ENCODE measurements at regions of chr2 and their contacts with region 1.

Region 1: DNA sequence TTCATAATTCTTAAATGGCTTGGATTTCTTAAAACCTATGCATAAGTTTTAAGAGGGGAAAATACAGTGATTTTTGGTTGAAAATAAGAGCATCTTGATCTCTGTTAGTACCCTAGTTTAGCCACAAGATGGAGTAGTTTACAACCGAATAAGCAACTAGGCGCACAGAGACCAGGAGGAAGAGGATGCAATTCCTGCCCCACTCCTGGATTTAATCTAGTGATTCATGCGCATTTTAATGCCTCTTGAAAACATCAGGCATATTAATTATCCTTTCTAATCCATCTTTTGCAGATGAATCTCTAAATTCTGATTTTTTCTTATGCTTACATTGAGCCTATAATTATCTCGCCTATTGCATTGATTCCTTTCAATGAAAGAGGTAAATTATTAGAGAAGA is 76.7 kb downstream of the MRPS9 start:
- DNase-seq: no peak
- ATAC-seq: no peak
- H3K4me3 Mint-ChIP-seq: no peak overlapping the region
- H3K27ac Mint-ChIP-seq: no peak overlapping the region
- H3K4me1 Mint-ChIP-seq: no peaks in the 10 kb centered on the region
- H3K27me3 Mint-ChIP-seq: no peaks in the 10 kb centered on the region

Region 2: DNA sequence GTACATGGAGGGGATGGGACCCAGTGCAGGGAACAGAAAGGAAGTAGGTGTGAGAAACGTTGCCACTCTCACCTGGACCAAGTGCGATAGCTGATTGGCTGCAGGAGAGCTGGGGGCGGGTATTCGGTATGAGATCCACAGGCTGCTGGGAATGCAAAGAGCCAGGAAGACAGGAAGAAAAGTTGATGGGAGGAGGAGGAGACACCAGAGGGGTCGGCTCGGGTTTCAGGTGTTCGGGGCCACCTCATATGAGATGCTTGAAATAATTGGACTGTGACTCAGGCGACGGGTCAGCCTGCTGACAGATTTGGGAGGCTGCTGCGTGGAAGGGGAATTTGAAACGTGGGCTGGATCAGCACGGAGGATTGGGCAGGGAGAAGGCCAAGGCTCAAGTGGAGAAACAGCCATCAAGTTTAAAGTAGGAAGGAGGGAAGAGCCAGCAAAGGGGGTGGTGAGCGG is 11.6 kb before region 1 on chr2:
- CTCF ChIA-PET with region 1: interaction called, 10 read pairs
- POLR2A ChIA-PET with region 1: no interaction called
- intact Hi-C with region 1: no loop called
- DNase-seq: no peak
- ATAC-seq: no peak
- H3K4me3 Mint-ChIP-seq: no peak overlapping the region
- H3K27ac Mint-ChIP-seq: no peak overlapping the region
- H3K4me1 Mint-ChIP-seq: no peaks in the 10 kb centered on the region
- H3K27me3 Mint-ChIP-seq: no peaks in the 10 kb centered on the region

Region 3: DNA sequence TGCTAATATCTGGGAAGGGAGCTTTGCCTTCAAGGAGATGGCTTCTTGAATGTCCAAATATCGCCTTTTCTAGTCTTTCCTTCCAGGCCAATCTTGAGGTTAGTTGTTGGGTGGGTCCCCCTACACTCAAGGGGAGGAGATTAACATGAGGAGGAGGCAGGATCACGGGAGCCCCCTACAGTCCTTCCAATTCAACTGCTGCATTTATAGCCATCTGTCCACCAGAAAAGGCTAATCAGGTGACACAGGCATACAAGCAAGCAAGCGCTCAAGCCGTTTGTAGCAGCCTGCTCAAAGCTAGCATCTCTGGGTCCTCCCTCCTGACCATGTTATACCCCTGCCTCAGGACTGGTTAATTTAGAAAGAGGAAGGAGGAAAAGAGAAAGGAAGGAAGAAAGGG is 10.9 kb after region 1 on chr2:
- CTCF ChIA-PET with region 1: interaction called, 15 read pairs
- POLR2A ChIA-PET with region 1: no interaction called
- intact Hi-C with region 1: no loop called
- DNase-seq: no peak
- ATAC-seq: no peak
- H3K4me3 Mint-ChIP-seq: no peak overlapping the region
- H3K27ac Mint-ChIP-seq: no peak overlapping the region
- H3K4me1 Mint-ChIP-seq: peaks cover 7% of the 10 kb centered on the region
- H3K27me3 Mint-ChIP-seq: peaks cover 5% of the 10 kb centered on the region

Region 4: DNA sequence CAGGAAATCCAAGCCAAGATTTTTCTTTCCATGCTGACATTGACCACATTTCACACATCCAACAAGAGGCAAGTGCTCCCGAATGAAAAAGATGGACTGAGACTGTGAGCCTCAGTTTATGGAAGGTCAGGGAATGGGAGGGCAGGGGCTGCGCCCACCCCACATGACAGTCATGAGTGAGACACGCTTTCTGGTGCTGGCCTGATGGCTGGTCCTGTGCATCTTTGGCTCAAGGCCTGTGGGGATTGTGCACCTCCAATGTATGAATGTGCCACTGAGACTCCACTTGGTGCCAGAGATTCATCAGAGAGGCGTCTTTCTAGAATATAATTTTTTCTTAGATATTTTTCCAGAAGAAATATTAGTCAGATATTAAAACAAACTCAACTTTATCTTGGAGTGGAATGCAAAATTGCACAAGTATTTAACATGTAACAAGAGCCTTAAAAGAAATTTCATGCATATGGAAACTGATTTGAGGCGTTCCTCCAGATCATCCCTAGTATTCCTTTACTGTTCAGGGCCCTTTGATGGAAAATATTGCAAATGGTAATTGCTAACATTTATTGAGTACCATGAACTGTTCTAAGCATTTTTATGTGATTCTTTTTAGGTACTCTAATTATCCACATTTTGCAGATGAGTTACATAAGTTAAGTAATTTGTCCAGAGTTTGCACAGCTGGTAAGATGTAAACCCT is 39.7 kb after region 1 on chr2:
- CTCF ChIA-PET with region 1: interaction called, 12 read pairs
- POLR2A ChIA-PET with region 1: no interaction called
- intact Hi-C with region 1: no loop called
- DNase-seq: no peak
- ATAC-seq: no peak
- H3K4me3 Mint-ChIP-seq: no peak overlapping the region
- H3K27ac Mint-ChIP-seq: no peak overlapping the region
- H3K4me1 Mint-ChIP-seq: no peaks in the 10 kb centered on the region
- H3K27me3 Mint-ChIP-seq: peaks cover 40% of the 10 kb centered on the region

Region 5: DNA sequence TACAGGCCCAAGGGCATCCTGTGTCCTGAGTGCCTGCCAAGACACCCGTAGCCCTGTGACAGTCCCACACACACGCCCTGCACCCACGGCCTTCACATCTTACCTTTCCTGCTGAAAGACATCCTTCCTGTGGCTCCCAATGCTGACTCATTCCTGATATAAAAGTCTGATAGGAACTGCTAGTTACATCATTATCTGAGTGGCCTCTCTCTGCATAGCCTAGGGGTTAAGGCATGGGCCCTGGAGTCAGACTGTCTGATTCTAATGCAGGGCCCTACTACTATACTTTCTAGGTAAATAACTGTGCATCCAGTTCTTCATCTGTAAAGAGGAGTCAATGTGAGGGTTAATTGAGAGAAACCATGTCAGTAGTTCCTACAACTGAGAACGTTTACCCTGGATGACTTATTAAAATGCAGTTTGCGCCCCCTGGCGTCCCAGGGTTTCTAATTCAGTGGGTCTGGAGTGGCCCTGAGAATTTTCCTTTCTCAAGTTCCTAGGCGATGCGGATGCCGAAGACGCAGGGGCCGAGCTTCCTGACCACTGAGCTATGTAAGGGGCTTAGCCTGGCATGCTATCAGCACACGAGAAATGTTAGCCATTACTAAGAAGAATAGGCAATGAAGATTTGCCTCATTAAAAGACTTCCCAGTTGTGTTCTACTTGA is 121.0 kb after region 1 on chr2:
- CTCF ChIA-PET with region 1: interaction called, 206 read pairs
- POLR2A ChIA-PET with region 1: no interaction called
- intact Hi-C with region 1: loop called (anchors 1 kb)
- DNase-seq: peak; percentile 85
- ATAC-seq: peak; percentile 77
- H3K4me3 Mint-ChIP-seq: no peak overlapping the region
- H3K27ac Mint-ChIP-seq: no peak overlapping the region
- H3K4me1 Mint-ChIP-seq: peaks cover 6% of the 10 kb centered on the region
- H3K27me3 Mint-ChIP-seq: no peaks in the 10 kb centered on the region

Measured in activated CD4-positive, alpha-beta T cell treated with anti-CD3 and anti-CD28 coated beads for 36 hours (primary cell).